Breast epithelium (tissue), 4 donors: ENCODE measurements at regions of chr1 and their contacts with region 1.

Region 1: DNA sequence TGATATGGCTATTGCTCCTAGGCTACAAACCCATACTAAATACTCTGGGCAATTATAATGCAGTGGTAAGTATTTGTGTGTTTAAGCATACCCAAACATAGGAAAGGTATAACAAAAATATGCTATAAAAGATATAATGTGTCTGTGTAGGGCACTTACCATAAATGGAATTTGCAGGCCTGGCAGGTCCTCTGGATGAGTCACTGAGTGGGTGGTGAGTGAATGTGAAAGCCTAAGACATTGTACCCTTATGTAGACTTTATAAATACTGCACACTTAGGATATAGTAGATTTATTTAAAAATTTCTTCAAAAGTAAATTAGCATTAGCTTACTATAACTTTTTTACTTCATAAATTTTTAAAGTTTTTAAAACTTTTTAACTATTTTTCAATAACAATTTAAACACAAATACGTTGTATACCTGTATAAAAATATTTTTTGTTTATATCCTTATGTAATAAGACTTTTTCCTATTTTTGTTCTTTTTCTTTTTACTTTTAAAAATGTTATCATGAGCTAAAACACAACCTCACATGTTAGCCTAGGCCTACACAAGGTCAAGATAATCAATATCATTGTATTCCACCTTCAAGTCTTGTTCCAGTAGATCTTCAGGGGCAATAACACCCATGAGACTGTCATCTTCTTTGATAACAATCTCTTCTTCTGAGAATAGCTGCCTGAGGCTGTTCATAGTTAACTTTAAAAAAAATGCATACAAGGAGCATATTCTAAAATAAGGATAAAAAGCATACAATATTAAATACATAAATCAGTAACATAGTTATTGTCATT is 306.3 kb upstream of the RGS18 start:
- DNase-seq: no peak
- H3K4me3 ChIP-seq: no peak overlapping the region
- H3K27ac ChIP-seq: no peak overlapping the region
- H3K4me1 ChIP-seq: no peaks in the 10 kb centered on the region
- H3K27me3 ChIP-seq: no peaks in the 10 kb centered on the region
- CTCF ChIP-seq: no peak
- POLR2A ChIP-seq: no peak

Region 2: DNA sequence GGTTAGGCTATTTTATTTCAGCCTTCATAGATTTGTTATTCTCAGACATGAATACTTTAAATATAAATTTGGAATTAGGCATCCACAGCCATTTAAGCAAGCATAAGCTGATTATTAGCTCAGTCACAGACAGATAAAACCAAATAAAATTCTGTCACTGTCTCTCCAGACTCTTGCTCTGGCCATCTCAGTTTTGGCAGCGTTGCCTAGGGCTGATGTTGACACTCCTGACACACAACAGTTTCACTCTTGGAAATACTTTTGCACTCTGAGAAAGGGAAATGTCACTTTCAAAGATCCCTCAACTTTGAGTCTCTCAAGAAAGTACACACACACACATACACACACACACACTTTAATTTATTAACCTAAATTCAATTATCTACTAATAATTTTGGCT is 1747.0 kb before region 1 on chr1:
- intact Hi-C with region 1: loop called (anchors 10 kb)
- DNase-seq: no peak
- H3K4me3 ChIP-seq: no peak overlapping the region
- H3K27ac ChIP-seq: no peak overlapping the region
- H3K4me1 ChIP-seq: no peaks in the 10 kb centered on the region
- H3K27me3 ChIP-seq: no peaks in the 10 kb centered on the region
- CTCF ChIP-seq: no peak
- POLR2A ChIP-seq: no peak

Region 3: GRCh38 chr1:191804311-191804710 is 47.7 kb before region 1 on chr1:
- intact Hi-C with region 1: no loop called
- DNase-seq: no peak
- H3K4me3 ChIP-seq: no peak overlapping the region
- H3K27ac ChIP-seq: no peak overlapping the region
- H3K4me1 ChIP-seq: no peaks in the 10 kb centered on the region
- H3K27me3 ChIP-seq: no peaks in the 10 kb centered on the region
- CTCF ChIP-seq: no peak
- POLR2A ChIP-seq: no peak